Endothelial cell of umbilical vein (primary cell): ENCODE measurements at regions of chr6 and their contacts with region 1.

Region 1: DNA sequence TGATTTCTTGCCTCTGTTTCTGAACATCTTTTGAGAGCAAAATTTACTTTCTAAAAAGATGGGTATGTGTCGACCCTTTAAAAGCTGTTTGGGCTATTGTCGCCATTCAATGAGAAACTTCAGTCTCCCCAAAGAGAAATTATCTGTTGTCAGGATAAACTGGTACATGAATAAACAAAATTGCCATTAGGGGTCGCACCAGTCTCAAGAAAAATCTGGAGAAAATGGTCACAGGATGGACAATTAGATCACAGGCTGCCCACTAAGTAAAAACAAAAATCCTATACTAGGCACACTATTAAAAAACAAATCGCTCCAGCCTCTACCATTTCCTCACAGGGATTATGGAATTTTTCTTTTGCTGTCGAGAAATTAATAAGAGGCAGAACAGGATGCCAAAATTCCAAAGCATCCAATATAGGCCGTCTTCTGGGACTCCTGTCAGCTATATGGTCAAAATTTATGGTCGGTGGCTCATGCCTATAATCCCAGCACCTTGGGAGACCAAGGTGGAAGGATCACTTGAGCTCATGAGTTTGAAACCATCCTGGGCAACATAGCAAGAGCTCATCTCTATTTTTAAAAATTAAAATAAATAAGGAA is 5.5 kb upstream of the HLA-E start:
- DNase-seq: peak; percentile 84
- H3K4me3 ChIP-seq: no peak overlapping the region
- H3K27ac ChIP-seq: no peak overlapping the region
- H3K4me1 ChIP-seq: peaks cover 11% of the 10 kb centered on the region
- H3K27me3 ChIP-seq: peaks cover 29 to 32% of the 10 kb centered on the region in 2 experiments
- CTCF ChIP-seq: peak; percentile 36 to 40
- POLR2A ChIP-seq: no peak

Region 2: DNA sequence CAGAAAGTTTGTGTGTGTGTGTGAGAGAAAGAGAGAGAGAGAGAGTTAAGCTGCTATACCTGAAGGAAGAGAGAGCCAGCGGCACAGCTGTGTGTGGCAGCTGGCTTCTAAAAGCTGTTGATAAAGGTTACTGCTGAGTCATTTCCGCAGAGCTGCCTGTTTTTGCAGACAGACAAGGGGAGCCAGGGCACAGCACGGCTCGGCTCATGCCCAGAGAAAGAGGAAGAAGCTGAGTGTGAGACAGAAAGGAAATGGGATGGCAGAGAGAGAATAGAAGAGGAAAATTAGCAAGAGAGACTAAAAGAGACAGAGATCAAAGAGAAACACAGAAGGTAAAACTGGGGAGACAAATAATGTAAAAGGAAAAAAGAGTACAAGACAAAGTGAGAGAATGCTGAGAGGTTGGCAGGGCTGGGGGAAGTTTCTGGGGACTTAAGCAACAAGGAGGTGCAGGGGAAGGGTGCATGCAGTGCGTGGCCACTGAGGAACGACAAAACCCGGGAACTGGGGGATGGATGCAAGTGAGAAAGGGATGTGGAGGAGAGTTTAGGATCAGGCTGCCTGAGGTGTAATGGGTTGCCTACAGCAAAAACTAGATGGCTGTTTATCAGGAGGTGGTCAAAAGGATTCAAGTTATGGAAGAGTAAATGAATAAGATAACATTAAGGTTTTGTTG is 518.8 kb before region 1 on chr6:
- CTCF ChIA-PET with region 1: no interaction called
- POLR2A ChIA-PET with region 1: no interaction called
- dilution Hi-C with region 1: no loop called
- intact Hi-C with region 1: no loop called
- DNase-seq: peak; percentile 94
- H3K4me3 ChIP-seq: peak overlapping the region in 2 of 3 experiments; percentile 1 to 67
- H3K27ac ChIP-seq: peak overlapping the region; percentile 94
- H3K4me1 ChIP-seq: peaks cover 44% of the 10 kb centered on the region
- H3K27me3 ChIP-seq: no peaks in the 10 kb centered on the region
- CTCF ChIP-seq: no peak
- POLR2A ChIP-seq: no peak

Region 3: DNA sequence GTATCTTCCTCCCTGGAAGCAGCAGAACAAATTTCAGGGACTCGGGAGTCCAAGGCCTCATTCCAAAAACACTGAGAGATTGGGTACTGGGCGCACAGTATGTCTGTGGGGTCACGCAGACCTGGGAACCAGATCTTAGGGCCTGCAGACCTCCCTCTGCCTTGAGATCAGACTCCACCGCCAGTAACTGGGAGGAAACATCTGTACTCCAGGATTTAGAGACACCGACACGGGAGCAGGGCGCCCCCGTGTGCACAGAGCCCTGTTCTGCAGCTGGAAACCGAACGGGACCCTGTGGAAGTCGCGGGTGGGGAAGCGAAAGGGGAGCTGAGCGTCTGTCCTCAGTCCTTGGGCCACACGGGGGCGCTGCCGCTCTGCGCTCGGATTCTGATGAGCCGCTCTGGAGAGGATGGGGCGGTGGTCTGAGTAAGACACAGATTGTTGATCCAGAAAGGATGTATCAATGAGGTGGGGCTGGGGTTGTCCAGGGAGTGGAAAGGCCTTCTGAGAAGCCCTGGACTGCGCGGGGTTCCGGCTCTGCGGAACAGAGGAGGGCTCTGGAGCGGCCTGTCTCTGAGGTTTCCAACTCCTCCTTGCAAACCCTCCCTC is 30.2 kb before region 1 on chr6:
- CTCF ChIA-PET with region 1: interaction called, 34 read pairs
- POLR2A ChIA-PET with region 1: no interaction called
- dilution Hi-C with region 1: no loop called
- intact Hi-C with region 1: loop called (anchors 1 kb)
- DNase-seq: peak; percentile 93
- H3K4me3 ChIP-seq: no peak overlapping the region
- H3K27ac ChIP-seq: no peak overlapping the region
- H3K4me1 ChIP-seq: no peaks in the 10 kb centered on the region
- H3K27me3 ChIP-seq: peaks cover 76 to 87% of the 10 kb centered on the region in 2 experiments
- CTCF ChIP-seq: peak; percentile 96
- POLR2A ChIP-seq: no peak

Region 4: GRCh38 chr6:30533460-30534294 is 49.9 kb after region 1 on chr6:
- CTCF ChIA-PET with region 1: interaction called, 87 read pairs
- POLR2A ChIA-PET with region 1: interaction called, 10 read pairs
- dilution Hi-C with region 1: no loop called
- intact Hi-C with region 1: loop called (anchors 1 kb)
- DNase-seq: no peak
- H3K4me3 ChIP-seq: no peak overlapping the region
- H3K27ac ChIP-seq: no peak overlapping the region
- H3K4me1 ChIP-seq: peaks cover 6% of the 10 kb centered on the region
- H3K27me3 ChIP-seq: no peaks in the 10 kb centered on the region
- CTCF ChIP-seq: no peak
- POLR2A ChIP-seq: no peak

Region 5: GRCh38 chr6:30590994-30591393 is 107.2 kb after region 1 on chr6:
- CTCF ChIA-PET with region 1: interaction called, 149 read pairs
- POLR2A ChIA-PET with region 1: no interaction called
- dilution Hi-C with region 1: no loop called
- intact Hi-C with region 1: no loop called
- DNase-seq: peak; percentile 49
- H3K4me3 ChIP-seq: no peak overlapping the region
- H3K27ac ChIP-seq: no peak overlapping the region
- H3K4me1 ChIP-seq: peaks cover 2% of the 10 kb centered on the region
- H3K27me3 ChIP-seq: no peaks in the 10 kb centered on the region
- CTCF ChIP-seq: no peak
- POLR2A ChIP-seq: no peak

Region 6: GRCh38 chr6:30616811-30617564 is 133.2 kb after region 1 on chr6 and contains the start of gene PPP1R10:
- CTCF ChIA-PET with region 1: interaction called, 44 read pairs
- POLR2A ChIA-PET with region 1: interaction called, 12 read pairs
- dilution Hi-C with region 1: no loop called
- intact Hi-C with region 1: loop called (anchors 5 kb)
- DNase-seq: peak; percentile 100
- H3K4me3 ChIP-seq: peak within 1 kb of the TSS; percentile 51 to 84 (median 73)
- H3K27ac ChIP-seq: peak within 1 kb of the TSS; percentile 96
- H3K4me1 ChIP-seq: peaks cover 21% of the 10 kb centered on the region
- H3K27me3 ChIP-seq: no peaks in the 10 kb centered on the region
- CTCF ChIP-seq: no peak
- POLR2A ChIP-seq: peak; percentile 100
- total RNA-seq, gene PPP1R10: 75.1 and 88.3 TPM in 2 replicates

Region 7: DNA sequence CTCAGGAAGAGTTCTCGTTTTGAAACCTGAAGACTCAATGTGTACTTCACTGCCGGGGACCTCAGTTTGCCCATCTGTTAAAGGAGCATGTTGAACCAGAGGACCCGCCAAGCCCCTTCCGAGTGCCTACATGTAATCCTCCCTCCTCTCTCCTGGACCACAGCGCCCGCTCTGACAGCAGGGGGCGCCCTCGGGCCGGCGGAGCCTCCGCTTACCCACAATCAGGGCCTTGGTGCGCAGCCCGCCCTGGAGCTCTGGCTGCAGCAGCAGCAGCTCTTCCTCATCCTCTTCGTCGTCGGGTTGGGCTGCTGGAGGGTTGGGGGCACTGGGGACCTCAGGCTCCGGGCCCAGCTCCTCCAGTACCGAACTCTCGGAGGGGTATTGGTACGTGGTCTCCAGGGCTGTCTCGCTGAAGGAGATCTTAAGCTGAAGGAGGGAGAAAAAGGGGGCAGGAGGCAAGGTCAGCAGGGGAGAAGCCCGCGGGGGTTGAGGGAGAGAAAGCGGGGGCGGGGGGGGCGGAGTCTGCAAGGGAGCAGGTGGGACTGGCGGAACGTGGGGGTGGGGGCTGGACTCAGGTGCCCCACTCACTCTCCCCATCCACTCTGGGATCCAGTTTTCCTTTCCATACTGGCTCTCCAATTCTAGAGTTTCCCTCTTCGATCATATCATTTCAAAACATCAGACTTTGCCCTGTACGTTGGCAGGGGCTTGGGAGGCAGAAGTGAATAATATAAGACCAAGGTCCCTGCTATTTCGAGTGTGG is 195.4 kb after region 1 on chr6:
- CTCF ChIA-PET with region 1: interaction called, 10 read pairs
- POLR2A ChIA-PET with region 1: no interaction called
- dilution Hi-C with region 1: no loop called
- intact Hi-C with region 1: no loop called
- DNase-seq: peak; percentile 85
- H3K4me3 ChIP-seq: peak overlapping the region in 2 of 3 experiments; percentile 8 to 27
- H3K27ac ChIP-seq: peak overlapping the region; percentile 2
- H3K4me1 ChIP-seq: peaks cover 31% of the 10 kb centered on the region
- H3K27me3 ChIP-seq: no peaks in the 10 kb centered on the region
- CTCF ChIP-seq: peak; percentile 95 to 96
- POLR2A ChIP-seq: no peak

Region 8: GRCh38 chr6:30781743-30782424 is 298.1 kb after region 1 on chr6:
- CTCF ChIA-PET with region 1: no interaction called
- POLR2A ChIA-PET with region 1: no interaction called
- dilution Hi-C with region 1: no loop called
- intact Hi-C with region 1: no loop called
- DNase-seq: peak; percentile 86
- H3K4me3 ChIP-seq: no peak overlapping the region
- H3K27ac ChIP-seq: peak overlapping the region; percentile 82
- H3K4me1 ChIP-seq: peaks cover 24% of the 10 kb centered on the region
- H3K27me3 ChIP-seq: no peaks in the 10 kb centered on the region
- CTCF ChIP-seq: no peak
- POLR2A ChIP-seq: peak; percentile 42